ENCODE measurements at regions of chr11 and their contacts with region 1.

Region 1: GRCh38 chr11:66638177-66639065 is at the start of gene RBM4:
- DNase-seq: peak; percentile 100
- H3K4me3 ChIP-seq: peak within 1 kb of the TSS; percentile 70
- H3K4me3 Mint-ChIP-seq: peak within 1 kb of the TSS; percentile 95
- H3K27ac Mint-ChIP-seq: peak within 1 kb of the TSS; percentile 99
- H3K4me1 ChIP-seq: peaks cover 31% of the 10 kb centered on the region
- H3K4me1 Mint-ChIP-seq: peaks cover 48% of the 10 kb centered on the region
- H3K27me3 ChIP-seq: no peaks in the 10 kb centered on the region
- H3K27me3 Mint-ChIP-seq: no peaks in the 10 kb centered on the region
- CTCF ChIP-seq: peak in 1 of 2 experiments; percentile 26
- total RNA-seq, gene RBM4: 257 and 273 TPM in 2 replicates

Region 2: DNA sequence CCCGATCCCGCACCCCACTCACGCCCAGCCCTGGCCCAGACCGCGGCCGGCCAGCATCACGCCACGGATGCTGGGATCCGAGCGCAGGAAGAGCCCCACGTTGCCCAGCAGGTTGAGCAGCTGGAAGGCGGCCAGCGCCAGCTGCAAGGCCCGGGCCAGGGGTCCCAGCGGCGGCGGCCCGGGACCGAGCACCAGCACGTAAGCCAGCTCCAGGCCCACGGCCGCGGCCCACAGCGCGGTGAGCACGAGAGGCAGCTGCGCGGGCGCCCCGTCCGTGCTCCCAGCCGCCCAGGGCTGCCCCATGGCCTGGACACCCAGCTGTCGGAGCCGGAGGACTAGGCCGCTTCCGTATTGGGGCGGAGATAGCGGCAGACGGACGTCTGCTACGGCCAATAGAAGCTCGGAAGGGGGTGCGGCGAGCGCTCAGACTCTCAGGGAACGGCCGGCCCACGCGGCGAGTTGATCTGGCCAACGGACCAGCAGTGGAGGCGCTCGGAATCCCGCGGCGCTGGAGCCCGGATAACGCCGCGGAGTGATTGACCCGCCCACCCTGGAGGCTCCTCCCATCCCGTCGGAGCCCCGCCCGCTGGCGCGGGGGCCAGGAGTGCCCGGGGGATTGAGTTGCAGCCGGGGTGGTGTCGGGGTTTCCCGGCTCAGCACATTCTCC is 92.6 kb before region 1 on chr11 and contains the start of gene ZDHHC24:
- CTCF ChIA-PET with region 1: no interaction called
- POLR2A ChIA-PET with region 1: interaction called, 17 read pairs
- intact Hi-C with region 1: no loop called
- DNase-seq: peak; percentile 99
- H3K4me3 ChIP-seq: peak within 1 kb of the TSS; percentile 59
- H3K4me3 Mint-ChIP-seq: peak within 1 kb of the TSS; percentile 84
- H3K27ac Mint-ChIP-seq: peak within 1 kb of the TSS; percentile 60
- H3K4me1 ChIP-seq: peaks cover 22% of the 10 kb centered on the region
- H3K4me1 Mint-ChIP-seq: peaks cover 15% of the 10 kb centered on the region
- H3K27me3 ChIP-seq: no peaks in the 10 kb centered on the region
- H3K27me3 Mint-ChIP-seq: no peaks in the 10 kb centered on the region
- CTCF ChIP-seq: no peak
- total RNA-seq, gene ZDHHC24: 25.1 and 26.9 TPM in 2 replicates

Region 3: DNA sequence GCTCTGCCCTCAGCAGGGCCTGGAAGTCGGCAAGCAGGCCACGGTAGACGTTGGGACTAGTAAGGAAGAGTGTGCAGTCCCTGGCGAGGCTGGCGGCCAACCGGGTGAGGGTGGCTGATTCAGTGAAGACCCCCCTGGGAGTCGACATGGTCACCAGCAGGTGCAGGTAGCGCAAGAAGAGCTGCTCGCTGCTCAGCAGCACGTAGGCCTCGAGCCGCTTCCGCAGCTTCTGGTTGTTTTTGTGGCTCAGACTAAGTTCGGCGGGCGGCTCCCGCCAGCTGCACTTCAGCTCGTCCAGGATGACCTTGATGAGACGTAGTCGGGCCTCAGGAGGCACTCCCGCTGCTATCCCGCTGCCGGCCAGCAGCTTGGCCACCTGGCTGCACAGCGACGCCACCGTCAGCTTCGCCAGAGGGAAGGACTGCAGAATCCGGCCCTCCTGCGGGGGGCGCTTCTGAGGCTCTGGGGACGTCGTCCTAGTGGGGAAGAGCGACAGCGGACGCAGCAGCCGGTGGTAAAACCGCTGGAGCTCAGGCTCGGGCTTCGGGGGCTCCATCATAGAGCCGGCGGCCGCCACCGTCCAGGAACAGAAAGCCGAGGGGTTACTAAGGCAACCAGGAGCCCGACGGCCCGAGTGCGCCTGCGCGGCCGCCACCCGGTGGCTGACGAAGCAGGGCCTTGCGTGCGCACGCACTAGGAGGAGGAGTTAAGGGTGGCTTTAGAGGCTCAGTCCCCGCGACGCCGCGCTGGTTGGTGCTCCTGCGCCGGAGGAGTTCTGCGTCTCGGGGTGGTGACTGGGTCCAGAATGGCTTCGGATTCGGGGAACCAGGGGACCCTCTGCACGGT is 45.7 kb before region 1 on chr11 and contains the starts of genes CCDC87 and CCS:
- CTCF ChIA-PET with region 1: interaction called, 10 read pairs
- POLR2A ChIA-PET with region 1: interaction called, 13 read pairs
- intact Hi-C with region 1: loop called (anchors 2 kb)
- DNase-seq: peak; percentile 99 to 100
- H3K4me3 ChIP-seq: peak within 1 kb of the TSS; percentile 68
- H3K4me3 Mint-ChIP-seq: peak within 1 kb of the TSS; percentile 79
- H3K27ac Mint-ChIP-seq: peak within 1 kb of the TSS; percentile 90
- H3K4me1 ChIP-seq: peaks cover 23% of the 10 kb centered on the region
- H3K4me1 Mint-ChIP-seq: peaks cover 6% of the 10 kb centered on the region
- H3K27me3 ChIP-seq: no peaks in the 10 kb centered on the region
- H3K27me3 Mint-ChIP-seq: no peaks in the 10 kb centered on the region
- CTCF ChIP-seq: peak; percentile 93 to 99
- total RNA-seq, gene CCDC87: 1.0 TPM in 2 replicates
- total RNA-seq, gene CCS: 52.9 and 54.0 TPM in 2 replicates

Region 4: DNA sequence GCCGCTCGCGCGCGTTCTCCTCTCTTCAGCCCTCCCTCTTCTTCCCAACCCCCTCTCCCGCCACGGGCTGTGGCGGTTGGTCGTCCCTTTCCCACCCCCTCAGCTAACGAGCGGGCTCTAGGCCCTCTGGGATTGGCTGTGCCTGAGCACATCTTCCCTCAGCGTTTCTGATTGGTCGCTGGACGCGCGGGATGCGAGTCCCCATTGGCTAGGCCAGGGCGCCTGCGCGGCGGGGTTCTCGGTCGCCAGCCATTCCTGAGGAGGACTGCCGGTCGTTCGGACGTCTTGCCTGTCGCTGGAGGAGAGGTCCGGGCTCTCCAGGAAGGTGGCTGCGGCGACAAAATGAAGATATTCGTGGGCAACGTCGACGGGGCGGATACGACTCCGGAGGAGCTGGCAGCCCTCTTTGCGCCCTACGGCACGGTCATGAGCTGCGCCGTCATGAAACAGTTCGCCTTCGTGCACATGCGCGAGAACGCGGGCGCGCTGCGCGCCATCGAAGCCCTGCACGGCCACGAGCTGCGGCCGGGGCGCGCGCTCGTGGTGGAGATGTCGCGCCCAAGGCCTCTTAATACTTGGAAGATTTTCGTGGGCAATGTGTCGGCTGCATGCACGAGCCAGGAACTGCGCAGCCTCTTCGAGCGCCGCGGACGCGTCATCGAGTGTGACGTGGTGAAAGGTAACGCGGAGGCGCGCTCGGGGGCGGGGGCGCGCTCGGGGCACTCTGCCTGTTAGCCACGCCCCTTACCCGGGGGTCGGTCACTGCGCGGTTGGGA is 21.9 kb before region 1 on chr11 and contains the start of gene RBM14:
- CTCF ChIA-PET with region 1: interaction called, 9 read pairs
- POLR2A ChIA-PET with region 1: interaction called, 160 read pairs
- intact Hi-C with region 1: loop called (anchors 1 kb)
- DNase-seq: peak; percentile 100
- H3K4me3 ChIP-seq: peak within 1 kb of the TSS; percentile 57
- H3K4me3 Mint-ChIP-seq: peak within 1 kb of the TSS; percentile 94
- H3K27ac Mint-ChIP-seq: peak within 1 kb of the TSS; percentile 99
- H3K4me1 ChIP-seq: peaks cover 17% of the 10 kb centered on the region
- H3K4me1 Mint-ChIP-seq: peaks cover 25% of the 10 kb centered on the region
- H3K27me3 ChIP-seq: no peaks in the 10 kb centered on the region
- H3K27me3 Mint-ChIP-seq: no peaks in the 10 kb centered on the region
- CTCF ChIP-seq: no peak
- total RNA-seq, gene RBM14: 160 and 173 TPM in 2 replicates

Region 5: GRCh38 chr11:66625041-66625751 is 13.2 kb before region 1 on chr11:
- CTCF ChIA-PET with region 1: interaction called, 3 read pairs
- POLR2A ChIA-PET with region 1: interaction called, 14 read pairs
- intact Hi-C with region 1: no loop called
- DNase-seq: no peak
- H3K4me3 ChIP-seq: no peak overlapping the region
- H3K4me3 Mint-ChIP-seq: no peak overlapping the region
- H3K27ac Mint-ChIP-seq: no peak overlapping the region
- H3K4me1 ChIP-seq: no peaks in the 10 kb centered on the region
- H3K4me1 Mint-ChIP-seq: peaks cover under 1% of the 10 kb centered on the region
- H3K27me3 ChIP-seq: no peaks in the 10 kb centered on the region
- H3K27me3 Mint-ChIP-seq: no peaks in the 10 kb centered on the region
- CTCF ChIP-seq: no peak

Region 6: DNA sequence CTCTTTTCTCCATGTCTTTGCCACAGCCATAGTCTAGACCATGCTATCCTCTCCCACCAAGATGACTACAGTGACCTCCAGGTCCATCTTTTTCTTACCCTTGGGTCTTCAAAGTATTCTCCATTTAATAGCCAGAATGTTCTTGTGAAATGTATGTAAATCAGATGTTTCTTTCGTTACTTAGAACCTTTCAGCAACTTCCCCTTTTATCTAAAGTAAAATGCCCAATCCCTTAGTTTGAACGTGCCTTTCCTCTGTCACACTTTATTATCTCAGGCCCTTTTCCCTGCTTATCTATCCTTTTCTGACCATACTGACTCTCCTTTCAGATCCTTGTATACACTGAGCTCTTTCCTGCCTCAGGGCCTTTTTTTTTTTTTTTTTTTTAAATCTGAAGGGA is 21.3 kb after region 1 on chr11:
- CTCF ChIA-PET with region 1: interaction called, 3 read pairs
- POLR2A ChIA-PET with region 1: interaction called, 15 read pairs
- intact Hi-C with region 1: no loop called
- DNase-seq: no peak
- H3K4me3 ChIP-seq: no peak overlapping the region
- H3K4me3 Mint-ChIP-seq: peak overlapping the region; percentile 1
- H3K27ac Mint-ChIP-seq: peak overlapping the region; percentile 1
- H3K4me1 ChIP-seq: peaks cover 8% of the 10 kb centered on the region
- H3K4me1 Mint-ChIP-seq: peaks cover 12% of the 10 kb centered on the region
- H3K27me3 ChIP-seq: no peaks in the 10 kb centered on the region
- H3K27me3 Mint-ChIP-seq: no peaks in the 10 kb centered on the region
- CTCF ChIP-seq: no peak

Region 7: GRCh38 chr11:66842896-66843775 is 204.7 kb after region 1 on chr11 and contains the start of gene RCE1:
- CTCF ChIA-PET with region 1: no interaction called
- POLR2A ChIA-PET with region 1: interaction called, 3 read pairs
- intact Hi-C with region 1: loop called (anchors 1 kb)
- DNase-seq: peak; percentile 94 to 98
- H3K4me3 ChIP-seq: peak within 1 kb of the TSS; percentile 89
- H3K4me3 Mint-ChIP-seq: peak within 1 kb of the TSS; percentile 83
- H3K27ac Mint-ChIP-seq: peak within 1 kb of the TSS; percentile 85
- H3K4me1 ChIP-seq: peaks cover 6% of the 10 kb centered on the region
- H3K4me1 Mint-ChIP-seq: peaks cover 13% of the 10 kb centered on the region
- H3K27me3 ChIP-seq: no peaks in the 10 kb centered on the region
- H3K27me3 Mint-ChIP-seq: no peaks in the 10 kb centered on the region
- CTCF ChIP-seq: no peak
- total RNA-seq, gene RCE1: 57.6 and 60.7 TPM in 2 replicates

Region 8: DNA sequence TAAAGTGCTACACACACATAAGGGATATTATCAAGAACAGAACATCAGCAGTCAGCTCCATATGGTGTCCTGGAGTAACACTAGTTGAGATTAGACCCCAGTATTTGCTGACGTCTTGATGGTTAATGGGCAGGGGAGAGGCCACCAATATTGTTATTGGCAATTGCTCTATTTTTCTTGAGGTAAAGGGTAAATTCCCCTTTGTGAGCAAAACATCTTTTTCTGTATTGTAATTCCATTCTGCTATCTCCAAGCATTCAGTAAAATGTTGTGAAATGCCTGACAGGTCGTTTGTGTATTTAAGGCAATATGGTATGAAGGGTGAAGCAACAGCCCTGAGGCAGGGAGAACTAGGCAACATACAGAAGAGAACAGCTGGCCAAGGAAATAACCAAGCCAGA is 297.9 kb after region 1 on chr11:
- CTCF ChIA-PET with region 1: no interaction called
- POLR2A ChIA-PET with region 1: no interaction called
- intact Hi-C with region 1: no loop called
- DNase-seq: peak in 1 of 2 experiments; percentile 65
- H3K4me3 ChIP-seq: no peak overlapping the region
- H3K4me3 Mint-ChIP-seq: no peak overlapping the region
- H3K27ac Mint-ChIP-seq: no peak overlapping the region
- H3K4me1 ChIP-seq: peaks cover 21% of the 10 kb centered on the region
- H3K4me1 Mint-ChIP-seq: peaks cover 25% of the 10 kb centered on the region
- H3K27me3 ChIP-seq: no peaks in the 10 kb centered on the region
- H3K27me3 Mint-ChIP-seq: no peaks in the 10 kb centered on the region
- CTCF ChIP-seq: no peak